ENCODE measurements at regions of chr6 and their contacts with region 1.

Region 1: GRCh38 chr6:79869600-79870084 is 77.7 kb downstream of the ELOVL4 start:
- DNase-seq: peak; percentile 57 to 87 (median 77)
- ATAC-seq: peak; percentile 100
- H3K4me3 ChIP-seq: peak overlapping the region in 1 of 2 experiments; percentile 29
- H3K4me3 Mint-ChIP-seq: peak overlapping the region; percentile 69
- H3K27ac ChIP-seq: no peak overlapping the region
- H3K27ac Mint-ChIP-seq: no peak overlapping the region
- H3K4me1 ChIP-seq: no peaks in the 10 kb centered on the region
- H3K4me1 Mint-ChIP-seq: peaks cover 10% of the 10 kb centered on the region
- H3K27me3 ChIP-seq: no peaks in the 10 kb centered on the region
- H3K27me3 Mint-ChIP-seq: peaks cover 4% of the 10 kb centered on the region
- CTCF ChIP-seq: peak; percentile 91

Region 2: DNA sequence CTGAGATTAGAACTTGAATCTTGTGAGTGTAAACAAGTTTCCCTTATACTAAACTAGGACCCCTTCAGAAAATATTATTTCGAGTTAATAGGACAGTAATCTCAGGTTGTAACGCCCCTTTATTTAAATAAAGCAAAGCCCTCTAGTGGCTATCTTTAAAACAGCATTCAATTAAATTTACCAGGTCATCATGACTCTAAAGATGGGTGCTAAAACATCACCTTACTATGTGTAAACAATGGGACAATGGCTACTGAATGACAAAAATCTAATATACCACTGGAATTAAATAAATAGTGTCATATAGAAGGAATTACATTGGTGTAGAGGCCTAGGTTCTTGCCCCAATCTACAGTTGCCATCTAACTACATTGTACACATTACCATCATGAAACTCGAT is 1257.7 kb before region 1 on chr6:
- CTCF ChIA-PET with region 1: no interaction called
- POLR2A ChIA-PET with region 1: no interaction called
- intact Hi-C with region 1: no loop called
- DNase-seq: no peak
- ATAC-seq: no peak
- H3K4me3 ChIP-seq: no peak overlapping the region
- H3K4me3 Mint-ChIP-seq: no peak overlapping the region
- H3K27ac ChIP-seq: no peak overlapping the region
- H3K27ac Mint-ChIP-seq: no peak overlapping the region
- H3K4me1 ChIP-seq: no peaks in the 10 kb centered on the region
- H3K4me1 Mint-ChIP-seq: no peaks in the 10 kb centered on the region
- H3K27me3 ChIP-seq: no peaks in the 10 kb centered on the region
- H3K27me3 Mint-ChIP-seq: no peaks in the 10 kb centered on the region
- CTCF ChIP-seq: peak; percentile 23

Region 3: DNA sequence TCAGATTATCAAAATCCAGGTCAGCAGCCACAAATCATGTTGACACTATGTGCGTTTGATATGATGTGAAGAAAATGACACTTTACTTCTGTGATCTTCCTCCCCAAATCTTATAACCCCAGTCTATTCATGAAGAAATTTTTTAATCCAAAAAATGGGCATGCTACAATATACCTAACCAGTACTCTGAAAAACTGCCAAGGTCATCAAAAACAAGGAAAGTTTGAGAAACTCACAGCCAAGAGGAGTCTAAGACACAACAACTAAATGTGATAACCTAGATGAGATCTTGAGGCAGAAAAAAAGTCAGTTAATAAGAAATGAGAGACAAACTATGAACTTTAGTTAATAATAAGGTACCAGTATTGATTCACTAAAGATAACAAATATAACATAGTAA is 1202.9 kb before region 1 on chr6:
- CTCF ChIA-PET with region 1: no interaction called
- POLR2A ChIA-PET with region 1: no interaction called
- intact Hi-C with region 1: no loop called
- DNase-seq: no peak
- ATAC-seq: no peak
- H3K4me3 ChIP-seq: no peak overlapping the region
- H3K4me3 Mint-ChIP-seq: no peak overlapping the region
- H3K27ac ChIP-seq: no peak overlapping the region
- H3K27ac Mint-ChIP-seq: no peak overlapping the region
- H3K4me1 ChIP-seq: no peaks in the 10 kb centered on the region
- H3K4me1 Mint-ChIP-seq: no peaks in the 10 kb centered on the region
- H3K27me3 ChIP-seq: no peaks in the 10 kb centered on the region
- H3K27me3 Mint-ChIP-seq: no peaks in the 10 kb centered on the region
- CTCF ChIP-seq: no peak

Region 4: DNA sequence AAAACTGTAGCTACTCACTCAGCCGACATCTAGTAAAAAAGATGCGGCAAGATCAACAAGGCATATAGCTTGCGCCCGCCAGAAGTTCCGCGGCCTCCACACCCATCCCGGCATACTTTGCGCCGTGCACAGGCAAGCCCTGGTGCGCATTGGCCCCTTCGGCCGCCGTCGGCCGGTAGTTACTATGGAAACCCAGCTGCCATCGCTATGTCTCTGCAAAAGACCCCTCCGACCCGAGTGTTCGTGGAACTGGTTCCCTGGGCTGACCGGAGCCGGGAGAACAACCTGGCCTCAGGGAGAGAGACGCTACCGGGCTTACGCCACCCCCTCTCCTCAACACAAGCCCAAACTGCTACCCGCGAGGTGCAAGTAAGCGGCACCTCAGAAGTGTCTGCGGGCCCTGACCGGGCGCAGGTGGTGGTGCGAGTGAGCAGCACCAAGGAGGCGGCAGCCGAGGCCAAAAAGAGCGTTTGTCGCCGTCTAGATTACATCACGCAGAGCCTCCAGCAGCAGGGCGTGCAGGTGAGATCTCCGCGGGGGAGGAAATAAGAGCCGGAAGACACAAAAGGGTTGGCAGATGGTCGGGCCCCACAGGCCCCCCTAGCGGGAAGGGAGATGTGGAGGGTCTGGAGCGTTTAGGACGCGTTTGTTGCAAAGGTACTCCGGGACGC is 1002.1 kb before region 1 on chr6 and contains the start of gene IRAK1BP1:
- CTCF ChIA-PET with region 1: no interaction called
- POLR2A ChIA-PET with region 1: no interaction called
- intact Hi-C with region 1: loop called in 1 of 2 experiments (anchors 10 kb)
- DNase-seq: peak; percentile 58 to 86 (median 77)
- ATAC-seq: peak; percentile 91
- H3K4me3 ChIP-seq: peak within 1 kb of the TSS; percentile 83 to 88
- H3K4me3 Mint-ChIP-seq: peak within 1 kb of the TSS; percentile 96
- H3K27ac ChIP-seq: peak within 1 kb of the TSS; percentile 76 to 88
- H3K27ac Mint-ChIP-seq: peak within 1 kb of the TSS; percentile 95
- H3K4me1 ChIP-seq: peaks cover 10% of the 10 kb centered on the region
- H3K4me1 Mint-ChIP-seq: peaks cover 27% of the 10 kb centered on the region
- H3K27me3 ChIP-seq: no peaks in the 10 kb centered on the region
- H3K27me3 Mint-ChIP-seq: no peaks in the 10 kb centered on the region
- CTCF ChIP-seq: no peak
- total RNA-seq, gene IRAK1BP1: 1.0 to 1.3 TPM

Region 5: DNA sequence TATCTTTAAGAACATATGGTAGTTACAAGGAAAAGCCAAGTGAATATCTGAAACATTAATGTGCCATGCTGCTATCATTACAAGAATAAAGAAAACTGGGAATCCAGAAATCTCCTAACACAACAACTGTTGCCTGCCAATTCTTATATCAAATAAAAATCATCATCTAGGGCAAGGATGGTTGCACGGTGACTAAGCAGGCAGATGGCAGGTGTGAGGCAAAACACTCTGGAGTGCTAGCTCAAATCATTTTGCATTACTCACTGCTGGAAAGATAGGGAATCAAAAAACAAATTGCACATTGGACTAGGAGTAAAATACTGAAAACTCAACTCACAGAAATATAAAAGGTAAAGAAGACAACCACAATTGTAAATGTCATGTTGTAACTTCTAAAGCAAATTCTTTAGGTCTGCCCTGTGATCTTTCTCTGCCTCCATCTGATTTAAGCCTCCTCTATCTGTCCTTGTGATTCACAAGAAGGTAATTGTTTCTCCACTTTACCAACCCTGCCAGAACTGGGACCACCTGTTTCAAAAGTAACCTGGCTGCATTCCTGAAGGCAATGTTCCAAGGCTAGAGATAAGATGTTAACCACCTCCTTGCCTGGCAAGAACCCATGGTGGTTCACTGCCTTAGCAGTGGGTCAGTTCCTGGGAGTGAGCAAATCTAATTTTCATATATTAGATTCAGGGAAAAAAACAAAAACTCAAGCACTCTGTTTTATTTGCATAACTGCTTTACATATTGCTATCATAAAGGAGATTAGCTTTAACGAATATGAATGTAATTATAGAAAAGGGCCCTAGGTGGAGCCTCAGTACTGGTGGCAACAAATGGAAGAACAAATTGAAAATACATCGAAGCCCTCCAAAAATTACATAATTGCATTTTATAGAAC is 299.3 kb before region 1 on chr6:
- CTCF ChIA-PET with region 1: no interaction called
- POLR2A ChIA-PET with region 1: no interaction called
- intact Hi-C with region 1: loop called (anchors 2 to 5 kb)
- DNase-seq: peak in 2 of 9 experiments; percentile 42 to 56
- ATAC-seq: peak; percentile 31
- H3K4me3 ChIP-seq: no peak overlapping the region
- H3K4me3 Mint-ChIP-seq: peak overlapping the region; percentile 40
- H3K27ac ChIP-seq: no peak overlapping the region
- H3K27ac Mint-ChIP-seq: no peak overlapping the region
- H3K4me1 ChIP-seq: no peaks in the 10 kb centered on the region
- H3K4me1 Mint-ChIP-seq: peaks cover 3% of the 10 kb centered on the region
- H3K27me3 ChIP-seq: no peaks in the 10 kb centered on the region
- H3K27me3 Mint-ChIP-seq: no peaks in the 10 kb centered on the region
- CTCF ChIP-seq: peak; percentile 47

Region 6: GRCh38 chr6:79813854-79814709 is 55.6 kb before region 1 on chr6:
- CTCF ChIA-PET with region 1: interaction called, 5 read pairs
- POLR2A ChIA-PET with region 1: no interaction called
- intact Hi-C with region 1: loop called in 1 of 2 experiments (anchors 2 kb)
- DNase-seq: peak; percentile 6 to 70 (median 59)
- ATAC-seq: no peak
- H3K4me3 ChIP-seq: no peak overlapping the region
- H3K4me3 Mint-ChIP-seq: no peak overlapping the region
- H3K27ac ChIP-seq: no peak overlapping the region
- H3K27ac Mint-ChIP-seq: no peak overlapping the region
- H3K4me1 ChIP-seq: no peaks in the 10 kb centered on the region
- H3K4me1 Mint-ChIP-seq: no peaks in the 10 kb centered on the region
- H3K27me3 ChIP-seq: no peaks in the 10 kb centered on the region
- H3K27me3 Mint-ChIP-seq: peaks cover 3% of the 10 kb centered on the region
- CTCF ChIP-seq: peak; percentile 88

Region 7: GRCh38 chr6:80004173-80005072 is 134.8 kb after region 1 on chr6 and contains the start of gene TTK:
- CTCF ChIA-PET with region 1: interaction called, 3 read pairs
- POLR2A ChIA-PET with region 1: no interaction called
- intact Hi-C with region 1: loop called (anchors 1 to 2 kb)
- DNase-seq: peak; percentile 85 to 97 (median 90)
- ATAC-seq: peak; percentile 97
- H3K4me3 ChIP-seq: peak within 1 kb of the TSS; percentile 76 to 86
- H3K4me3 Mint-ChIP-seq: peak within 1 kb of the TSS; percentile 87
- H3K27ac ChIP-seq: peak within 1 kb of the TSS; percentile 84 to 95
- H3K27ac Mint-ChIP-seq: peak within 1 kb of the TSS; percentile 95
- H3K4me1 ChIP-seq: peaks cover 11% of the 10 kb centered on the region
- H3K4me1 Mint-ChIP-seq: peaks cover 24% of the 10 kb centered on the region
- H3K27me3 ChIP-seq: no peaks in the 10 kb centered on the region
- H3K27me3 Mint-ChIP-seq: peaks cover 5% of the 10 kb centered on the region
- CTCF ChIP-seq: no peak
- total RNA-seq, gene TTK: 0.30 to 0.97 TPM

Region 8: DNA sequence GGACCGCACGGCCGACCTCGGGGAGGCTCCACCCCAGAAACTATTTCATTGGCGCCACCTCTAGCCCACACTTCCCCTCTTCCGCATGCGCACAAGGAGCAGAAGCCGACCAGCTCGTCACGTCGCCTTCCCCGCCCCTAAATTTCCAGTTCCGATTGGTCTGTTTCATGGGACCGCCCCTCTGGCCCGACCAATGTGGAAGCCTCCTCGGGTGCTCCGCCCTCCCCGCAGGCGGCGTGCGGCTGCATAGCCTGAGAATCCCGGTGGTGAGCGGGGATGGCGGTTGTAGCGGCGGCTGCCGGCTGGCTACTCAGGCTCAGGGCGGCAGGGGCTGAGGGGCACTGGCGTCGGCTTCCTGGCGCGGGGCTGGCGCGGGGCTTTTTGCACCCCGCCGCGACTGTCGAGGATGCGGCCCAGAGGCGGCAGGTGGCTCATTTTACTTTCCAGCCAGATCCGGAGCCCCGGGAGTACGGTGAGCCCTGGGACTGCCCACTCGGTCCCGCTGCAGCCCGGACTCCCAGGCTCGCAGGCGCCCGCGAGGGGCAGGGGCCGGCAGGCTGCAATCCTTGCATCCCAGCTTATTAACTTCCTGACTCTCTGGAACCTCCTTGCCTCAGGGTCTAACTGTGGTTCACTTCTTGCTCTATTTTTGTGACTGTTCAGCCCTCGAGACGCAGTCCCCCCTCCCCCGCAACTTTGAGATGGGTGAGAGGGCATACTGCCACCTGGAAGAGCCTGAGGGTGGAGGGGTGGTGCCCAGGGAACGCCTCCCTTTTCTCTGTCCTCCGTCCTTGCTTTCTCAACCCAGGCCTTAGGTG is 237.0 kb after region 1 on chr6 and contains the start of gene BCKDHB:
- CTCF ChIA-PET with region 1: no interaction called
- POLR2A ChIA-PET with region 1: no interaction called
- intact Hi-C with region 1: loop called in 1 of 2 experiments (anchors 5 kb)
- DNase-seq: peak; percentile 95 to 99 (median 97)
- ATAC-seq: peak; percentile 97
- H3K4me3 ChIP-seq: peak within 1 kb of the TSS; percentile 71 to 81
- H3K4me3 Mint-ChIP-seq: peak within 1 kb of the TSS; percentile 93
- H3K27ac ChIP-seq: peak within 1 kb of the TSS; percentile 39 to 67
- H3K27ac Mint-ChIP-seq: peak within 1 kb of the TSS; percentile 91
- H3K4me1 ChIP-seq: peaks cover 15% of the 10 kb centered on the region
- H3K4me1 Mint-ChIP-seq: peaks cover 25% of the 10 kb centered on the region
- H3K27me3 ChIP-seq: no peaks in the 10 kb centered on the region
- H3K27me3 Mint-ChIP-seq: no peaks in the 10 kb centered on the region
- CTCF ChIP-seq: no peak
- total RNA-seq, gene BCKDHB: 8.2 to 8.3 TPM

Measured in CD8-positive, alpha-beta T cell (primary cell).